ENCODE measurements at regions of chr14 and their contacts with region 1.

Region 1: DNA sequence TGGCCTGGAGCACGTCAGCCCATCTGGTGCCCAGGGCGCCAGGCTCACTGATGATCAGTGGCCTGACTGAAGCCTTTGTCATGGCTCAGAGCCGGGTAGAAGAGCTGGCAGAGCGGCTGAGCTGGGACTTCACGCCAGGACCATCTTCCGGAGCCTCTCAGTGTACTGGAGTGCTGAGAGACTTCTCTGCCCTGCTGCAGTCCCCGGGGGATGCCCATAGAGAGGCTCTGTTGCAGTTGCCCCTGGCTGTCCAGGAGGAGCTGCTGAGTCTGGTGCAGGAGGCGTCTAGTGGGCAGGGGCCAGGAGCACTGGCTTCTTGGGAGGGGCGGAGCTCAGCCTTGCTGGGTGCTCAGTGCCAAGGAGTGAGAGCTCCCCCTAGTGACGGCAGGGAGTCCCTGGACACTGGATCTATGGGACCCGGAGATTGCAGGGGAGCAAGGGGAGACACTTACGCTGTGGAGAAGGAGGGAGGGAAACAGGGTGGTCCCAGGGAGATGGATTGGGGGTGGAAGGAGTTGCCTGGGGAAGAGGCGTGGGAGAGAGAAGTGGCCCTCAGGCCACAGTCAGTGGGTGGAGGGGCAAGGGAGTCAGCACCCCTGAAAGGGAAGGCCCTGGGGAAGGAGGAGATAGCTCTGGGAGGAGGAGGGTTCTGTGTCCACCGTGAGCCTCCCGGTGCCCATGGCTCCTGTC is 2.0 kb downstream of the KHNYN start:
- DNase-seq: peak; percentile 94 to 96 (median 95)
- H3K4me3 ChIP-seq: peak overlapping the region in 3 of 7 experiments; percentile 81 to 93 (median 89)
- H3K27ac ChIP-seq: no peak overlapping the region
- H3K4me1 ChIP-seq: peaks cover 12 to 68% (median 66%) of the 10 kb centered on the region in 4 experiments
- H3K27me3 ChIP-seq: no peaks in the 10 kb centered on the region

Region 2: DNA sequence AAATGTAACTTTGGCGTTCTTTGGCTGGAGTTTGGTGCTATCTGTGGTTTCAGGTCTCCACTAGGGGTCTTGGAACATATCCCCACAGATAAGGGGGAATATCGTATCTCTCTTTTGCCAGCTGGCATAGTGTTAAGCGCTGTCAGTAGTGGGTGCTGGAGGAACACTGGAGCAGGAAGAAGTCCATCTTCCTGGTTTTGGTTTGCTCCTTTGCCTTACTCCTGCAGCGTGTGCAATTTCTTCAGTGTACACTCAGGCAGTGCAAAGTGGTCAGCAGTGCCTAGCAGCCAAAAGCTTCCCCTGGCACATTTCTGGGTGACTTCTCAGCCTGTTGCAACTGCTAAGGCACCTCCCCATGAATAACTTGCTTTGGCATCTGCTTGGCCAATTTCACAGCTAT is 80.2 kb before region 1 on chr14:
- CTCF ChIA-PET with region 1: interaction called, 130 read pairs
- POLR2A ChIA-PET with region 1: interaction called, 5 read pairs
- DNase-seq: peak in 2 of 3 donors; percentile 33 to 47
- H3K4me3 ChIP-seq: no peak overlapping the region
- H3K27ac ChIP-seq: no peak overlapping the region
- H3K4me1 ChIP-seq: no peaks in the 10 kb centered on the region
- H3K27me3 ChIP-seq: peaks cover 0 to 2% (median 0%) of the 10 kb centered on the region in 5 experiments

Region 3: GRCh38 chr14:24392325-24393091 is 39.2 kb before region 1 on chr14:
- CTCF ChIA-PET with region 1: interaction called, 30 read pairs
- POLR2A ChIA-PET with region 1: interaction called, 6 read pairs
- DNase-seq: peak in 1 of 3 donors; percentile 24
- H3K4me3 ChIP-seq: no peak overlapping the region
- H3K27ac ChIP-seq: no peak overlapping the region
- H3K4me1 ChIP-seq: peaks cover 15 to 74% (median 62%) of the 10 kb centered on the region in 4 experiments
- H3K27me3 ChIP-seq: no peaks in the 10 kb centered on the region

Region 4: DNA sequence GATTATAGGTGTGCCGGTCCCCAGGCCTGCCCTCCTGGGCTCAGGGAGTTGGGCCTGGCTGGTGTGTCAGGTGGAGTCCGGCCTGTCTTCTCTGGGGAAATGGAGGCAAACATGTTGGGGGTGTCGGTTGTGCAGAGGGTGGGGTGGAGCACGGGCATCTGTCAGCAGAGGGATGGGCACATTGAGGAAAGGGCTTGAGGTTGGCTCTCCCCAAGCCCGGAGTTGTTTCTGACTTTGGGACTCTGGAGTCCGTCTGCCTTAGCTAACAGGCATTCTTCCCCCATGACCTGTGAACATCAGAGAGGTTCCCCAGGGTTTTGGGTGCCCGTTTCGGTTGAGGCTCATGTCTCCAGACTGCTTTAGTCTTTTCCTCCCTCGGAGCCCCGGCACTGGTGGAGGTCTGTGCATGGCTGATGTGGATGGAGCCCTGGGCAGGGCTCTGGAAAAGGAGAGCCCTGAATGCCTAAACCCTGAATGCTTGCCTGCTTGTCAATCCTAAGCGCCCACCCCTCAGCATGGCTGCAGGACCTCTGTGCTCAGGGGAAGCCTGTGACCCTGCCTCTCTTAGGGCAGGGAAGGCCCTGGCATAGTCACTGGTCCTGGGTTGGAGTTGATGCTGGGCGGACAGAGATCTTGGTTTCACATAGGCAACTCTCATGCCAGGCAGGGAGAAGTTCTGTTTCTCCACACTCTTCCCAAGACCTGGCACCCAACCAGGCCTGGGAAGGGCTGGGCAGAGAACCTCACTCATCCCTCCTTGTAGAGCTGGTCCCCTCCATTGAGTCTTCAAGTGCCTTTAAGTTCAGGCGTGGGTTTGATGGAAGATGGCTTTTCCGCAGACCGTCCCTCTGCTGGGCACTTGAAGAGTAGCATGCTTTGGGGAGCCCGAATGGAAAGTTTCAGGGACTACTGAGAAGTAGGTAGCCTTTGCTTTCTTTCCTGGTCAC is 20.0 kb before region 1 on chr14:
- CTCF ChIA-PET with region 1: interaction called, 489 read pairs
- POLR2A ChIA-PET with region 1: interaction called, 3 read pairs
- DNase-seq: peak; percentile 64 to 78 (median 76)
- H3K4me3 ChIP-seq: no peak overlapping the region
- H3K27ac ChIP-seq: no peak overlapping the region
- H3K4me1 ChIP-seq: no peaks in the 10 kb centered on the region
- H3K27me3 ChIP-seq: no peaks in the 10 kb centered on the region

Measured in common myeloid progenitor, CD34-positive (primary cell).